CD8-positive, alpha-beta T cell (primary cell): ENCODE measurements at regions of chr7 and their contacts with region 1.

Region 1: DNA sequence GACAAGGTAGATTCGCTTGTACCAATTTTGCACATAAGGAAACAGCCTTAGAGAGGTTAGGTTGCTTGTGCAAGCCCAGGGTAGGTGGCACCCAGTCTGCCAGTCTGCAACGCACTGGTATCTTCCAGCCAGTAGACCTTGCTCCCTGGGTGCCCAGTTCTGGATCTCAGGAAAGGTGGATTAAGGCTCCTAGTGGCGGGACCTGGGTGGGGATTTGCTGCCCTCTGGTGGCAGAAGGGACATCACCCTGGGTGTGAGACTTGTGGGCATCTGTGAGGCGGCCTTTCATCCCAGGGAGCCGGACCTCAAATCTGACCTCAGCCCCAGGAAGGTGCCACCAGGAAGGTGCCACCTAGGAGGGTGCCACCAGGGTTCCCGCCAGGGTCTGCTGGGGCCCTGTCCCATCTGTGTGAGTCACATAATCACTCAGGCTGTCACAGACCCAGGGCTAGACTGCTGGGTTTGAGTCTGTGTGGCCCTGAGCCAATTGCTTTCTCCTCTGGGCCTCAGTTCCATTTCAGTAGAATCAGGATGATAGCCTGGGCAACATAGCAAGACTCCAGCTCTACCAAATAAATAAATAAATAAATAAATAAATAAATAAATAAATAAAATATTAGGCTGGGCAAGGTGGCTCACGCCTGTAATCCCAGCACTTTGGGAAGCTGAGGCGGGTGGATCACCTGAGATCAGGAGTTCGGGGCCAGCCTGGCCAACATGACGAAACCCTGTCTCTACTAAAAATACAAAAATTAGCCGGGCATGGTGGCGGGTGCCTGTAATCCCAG is 5.3 kb upstream of the PRKRIP1 start:
- DNase-seq: peak; percentile 34 to 81 (median 70)
- ATAC-seq: peak; percentile 71
- H3K4me3 ChIP-seq: no peak overlapping the region
- H3K4me3 Mint-ChIP-seq: no peak overlapping the region
- H3K27ac ChIP-seq: no peak overlapping the region
- H3K27ac Mint-ChIP-seq: no peak overlapping the region
- H3K4me1 ChIP-seq: peaks cover 4% of the 10 kb centered on the region
- H3K4me1 Mint-ChIP-seq: peaks cover 5% of the 10 kb centered on the region
- H3K27me3 ChIP-seq: no peaks in the 10 kb centered on the region
- H3K27me3 Mint-ChIP-seq: no peaks in the 10 kb centered on the region
- CTCF ChIP-seq: peak; percentile 82

Region 2: GRCh38 chr7:102279537-102280400 is 111.1 kb before region 1 on chr7:
- CTCF ChIA-PET with region 1: interaction called, 32 read pairs
- POLR2A ChIA-PET with region 1: interaction called, 3 read pairs
- intact Hi-C with region 1: loop called in 1 of 2 experiments (anchors 1 kb)
- DNase-seq: peak; percentile 23 to 78 (median 61)
- ATAC-seq: peak; percentile 89
- H3K4me3 ChIP-seq: no peak overlapping the region
- H3K4me3 Mint-ChIP-seq: no peak overlapping the region
- H3K27ac ChIP-seq: no peak overlapping the region
- H3K27ac Mint-ChIP-seq: no peak overlapping the region
- H3K4me1 ChIP-seq: peaks cover 4% of the 10 kb centered on the region
- H3K4me1 Mint-ChIP-seq: peaks cover 7% of the 10 kb centered on the region
- H3K27me3 ChIP-seq: no peaks in the 10 kb centered on the region
- H3K27me3 Mint-ChIP-seq: no peaks in the 10 kb centered on the region
- CTCF ChIP-seq: peak; percentile 62

Region 3: GRCh38 chr7:102473261-102473991 is 82.5 kb after region 1 on chr7:
- CTCF ChIA-PET with region 1: no interaction called
- POLR2A ChIA-PET with region 1: no interaction called
- intact Hi-C with region 1: no loop called
- DNase-seq: peak in 1 of 9 experiments; percentile 18
- ATAC-seq: no peak
- H3K4me3 ChIP-seq: no peak overlapping the region
- H3K4me3 Mint-ChIP-seq: no peak overlapping the region
- H3K27ac ChIP-seq: no peak overlapping the region
- H3K27ac Mint-ChIP-seq: no peak overlapping the region
- H3K4me1 ChIP-seq: no peaks in the 10 kb centered on the region
- H3K4me1 Mint-ChIP-seq: no peaks in the 10 kb centered on the region
- H3K27me3 ChIP-seq: no peaks in the 10 kb centered on the region
- H3K27me3 Mint-ChIP-seq: no peaks in the 10 kb centered on the region
- CTCF ChIP-seq: no peak